A673 (cell line): ENCODE measurements at regions of chr7 and their contacts with region 1.

Region 1: DNA sequence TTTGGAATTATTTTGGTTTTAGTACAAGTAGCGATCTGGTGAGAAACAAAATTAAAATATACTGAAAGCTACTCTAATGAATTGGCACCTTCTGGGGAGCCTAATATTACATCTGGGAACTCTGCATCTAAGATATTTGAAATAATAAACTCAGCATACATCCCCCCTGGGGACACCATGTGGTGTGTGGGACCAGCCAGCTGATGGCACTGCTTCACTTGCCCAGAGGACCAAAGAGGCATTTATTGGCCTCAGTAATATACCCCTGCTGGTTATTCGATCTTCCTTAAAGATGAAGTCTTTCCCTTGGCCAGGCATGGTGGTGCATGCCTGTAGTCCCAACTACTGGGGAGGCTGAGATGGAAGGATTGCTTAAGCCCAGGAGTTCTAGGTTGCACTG is 195.1 kb upstream of the AUTS2 start:
- DNase-seq: peak; percentile 66
- H3K4me3 ChIP-seq: no peak overlapping the region
- H3K27ac ChIP-seq: no peak overlapping the region
- H3K4me1 ChIP-seq: no peaks in the 10 kb centered on the region
- H3K27me3 ChIP-seq: no peaks in the 10 kb centered on the region
- CTCF ChIP-seq: peak; percentile 53; the same call in 1 of the 2 replicates

Region 2: DNA sequence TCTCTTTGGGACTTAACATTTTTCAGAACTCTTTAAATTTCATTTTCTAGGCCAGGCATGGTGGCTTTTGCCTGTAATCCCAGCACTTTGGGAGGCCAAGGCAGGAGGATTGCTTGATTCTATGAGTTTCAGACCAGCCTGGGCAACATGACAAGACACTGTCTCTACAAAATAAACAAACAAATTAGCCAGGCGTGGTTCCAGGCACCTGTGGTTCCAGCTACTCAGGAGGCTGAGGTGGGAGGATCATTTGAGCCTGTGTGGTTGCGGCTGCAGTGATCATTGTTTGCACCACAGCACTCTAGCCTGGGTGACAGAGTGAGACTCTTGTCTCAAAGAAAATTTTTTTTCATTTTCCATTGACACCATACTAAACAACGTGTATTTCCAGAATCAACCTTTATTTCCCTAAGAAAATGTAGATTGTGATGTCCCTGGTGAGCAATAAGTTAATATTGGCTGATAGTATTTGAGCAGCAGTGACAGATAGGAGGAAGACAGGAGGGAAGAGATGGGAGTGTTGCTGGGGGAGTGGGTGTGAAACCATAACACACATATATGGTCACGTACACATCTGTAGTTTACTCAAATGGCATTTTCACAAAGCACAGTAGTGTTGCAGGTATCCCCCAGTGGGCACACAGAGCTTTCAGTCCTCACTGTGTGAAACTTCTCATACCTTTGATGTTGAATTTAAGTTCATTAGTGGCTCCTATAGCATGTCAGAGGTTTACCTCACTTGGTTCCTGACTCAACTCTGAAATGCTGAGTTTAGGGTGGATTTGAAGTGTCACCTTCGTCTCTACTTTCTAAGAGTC is 400.7 kb after region 1 on chr7:
- CTCF ChIA-PET with region 1: interaction called, 4 read pairs
- POLR2A ChIA-PET with region 1: no interaction called
- intact Hi-C with region 1: loop called (anchors 10 kb)
- DNase-seq: no peak
- H3K4me3 ChIP-seq: no peak overlapping the region
- H3K27ac ChIP-seq: no peak overlapping the region
- H3K4me1 ChIP-seq: no peaks in the 10 kb centered on the region
- H3K27me3 ChIP-seq: no peaks in the 10 kb centered on the region
- CTCF ChIP-seq: no peak

Region 3: GRCh38 chr7:70156057-70156456 is 752.9 kb after region 1 on chr7:
- CTCF ChIA-PET with region 1: no interaction called
- POLR2A ChIA-PET with region 1: no interaction called
- intact Hi-C with region 1: loop called (anchors 5 kb)
- DNase-seq: no peak
- H3K4me3 ChIP-seq: no peak overlapping the region
- H3K27ac ChIP-seq: no peak overlapping the region
- H3K4me1 ChIP-seq: peaks cover 4% of the 10 kb centered on the region
- H3K27me3 ChIP-seq: no peaks in the 10 kb centered on the region
- CTCF ChIP-seq: no peak